CD14-positive monocyte (primary cell): ENCODE measurements at regions of chr6 and their contacts with region 1.

Region 1: DNA sequence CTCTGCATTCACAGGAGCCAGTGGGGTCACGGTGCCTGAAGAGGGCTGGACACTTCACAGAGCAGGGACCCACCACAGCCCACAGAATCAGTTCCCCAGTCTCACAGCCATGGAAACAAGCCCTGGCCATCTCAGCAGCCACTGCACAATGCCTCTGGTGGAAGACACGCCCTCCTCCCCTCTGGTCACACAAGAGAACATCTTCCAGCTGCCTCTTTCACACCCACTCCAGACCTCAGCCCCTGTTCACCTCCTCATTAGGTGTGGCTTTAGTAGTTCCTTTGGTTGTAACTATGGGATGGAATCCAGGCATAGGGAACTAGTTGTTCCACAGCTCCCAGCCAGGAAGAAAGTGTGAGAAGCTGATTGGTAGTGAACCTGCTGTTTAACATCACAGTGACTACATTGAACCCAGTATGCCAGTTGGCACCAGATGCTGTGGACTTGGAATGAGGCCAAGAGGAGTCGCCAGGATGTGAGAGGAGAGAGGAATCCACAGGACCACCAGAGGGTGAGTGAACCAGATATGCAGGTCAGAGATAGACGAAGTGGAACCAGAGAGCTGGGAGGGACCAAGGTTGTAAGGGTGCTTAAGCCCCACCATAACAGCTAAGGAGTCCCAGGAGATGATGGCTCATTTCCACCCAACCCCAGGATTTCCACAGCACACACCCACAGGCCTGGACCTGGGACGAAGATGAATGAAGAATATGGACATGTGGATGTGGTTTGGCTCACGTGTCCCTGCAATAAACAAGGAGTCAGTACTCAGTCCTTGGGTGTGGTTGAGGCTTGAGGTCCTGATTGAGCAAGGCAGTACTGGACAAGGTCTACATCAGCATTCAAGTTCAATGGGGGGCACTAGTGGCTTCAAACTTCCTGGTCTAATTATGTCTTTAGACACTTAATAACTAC is 8.8 kb upstream of the BTN3A3 start:
- DNase-seq: no peak
- H3K4me3 ChIP-seq: no peak overlapping the region
- H3K4me3 Mint-ChIP-seq: no peak overlapping the region
- H3K27ac ChIP-seq: no peak overlapping the region
- H3K27ac Mint-ChIP-seq: no peak overlapping the region
- H3K4me1 ChIP-seq: peaks cover 6 to 12% of the 10 kb centered on the region in 2 donors
- H3K4me1 Mint-ChIP-seq: peaks cover 15% of the 10 kb centered on the region
- H3K27me3 ChIP-seq: no peaks in the 10 kb centered on the region
- H3K27me3 Mint-ChIP-seq: peaks cover 0 to 3% (median 0%) of the 10 kb centered on the region in 3 donors
- CTCF ChIP-seq: no peak

Region 2: GRCh38 chr6:26394289-26394688 is 37.2 kb before region 1 on chr6:
- intact Hi-C with region 1: no loop called
- DNase-seq: peak in 1 of 3 donors; percentile 28
- H3K4me3 ChIP-seq: no peak overlapping the region
- H3K4me3 Mint-ChIP-seq: no peak overlapping the region
- H3K27ac ChIP-seq: no peak overlapping the region
- H3K27ac Mint-ChIP-seq: no peak overlapping the region
- H3K4me1 ChIP-seq: peaks cover 28 to 30% of the 10 kb centered on the region in 2 donors
- H3K4me1 Mint-ChIP-seq: peaks cover 42% of the 10 kb centered on the region
- H3K27me3 ChIP-seq: no peaks in the 10 kb centered on the region
- H3K27me3 Mint-ChIP-seq: peaks cover 0 to 2% (median 1%) of the 10 kb centered on the region in 3 donors
- CTCF ChIP-seq: no peak

Region 3: DNA sequence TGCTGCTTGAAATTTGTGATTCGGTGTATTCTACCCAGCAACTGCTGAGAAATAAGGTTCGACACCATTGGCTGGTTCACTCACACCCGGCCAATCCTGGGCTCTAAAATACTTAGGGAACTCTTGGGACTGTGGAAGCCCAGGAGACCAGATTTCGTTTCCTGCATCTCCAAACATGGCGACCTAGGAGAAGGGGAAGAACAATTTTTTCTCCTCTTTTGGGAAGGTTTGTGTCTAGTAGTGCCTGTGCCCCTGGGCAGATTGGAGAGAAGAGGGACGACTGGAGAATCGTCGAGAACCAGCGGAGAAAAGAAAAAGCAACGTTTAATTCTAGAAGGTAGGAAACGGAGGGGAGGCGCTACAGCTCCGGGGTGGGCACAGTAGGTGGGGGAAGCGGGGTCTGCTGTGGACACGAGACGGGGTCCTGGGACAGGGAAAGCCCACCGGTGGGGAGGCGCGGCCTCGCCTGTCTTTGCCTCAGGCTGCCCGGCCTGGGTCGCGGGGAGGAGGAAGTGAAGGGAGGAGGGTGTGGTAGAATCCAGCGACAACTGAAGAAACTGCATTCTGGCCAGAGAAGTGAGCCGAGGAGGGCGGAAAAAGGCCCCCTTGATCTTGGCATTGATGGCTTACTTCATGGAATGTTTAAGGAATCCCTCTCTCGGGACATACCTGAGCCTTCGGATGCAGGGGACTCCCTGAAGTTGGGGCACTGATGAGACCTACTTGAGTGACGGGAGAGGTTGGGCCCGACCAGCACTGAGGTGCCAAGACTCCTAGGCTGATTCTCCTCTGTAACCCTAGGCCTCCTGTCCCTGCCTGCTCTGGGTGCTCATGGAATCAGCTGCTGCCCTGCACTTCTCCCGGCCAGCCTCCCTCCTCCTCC is 26.5 kb after region 1 on chr6 and contains the start of gene BTN2A1:
- intact Hi-C with region 1: loop called in 1 of 2 experiments (anchors 2 kb)
- DNase-seq: peak; percentile 81 to 93 (median 91)
- H3K4me3 ChIP-seq: peak within 1 kb of the TSS; percentile 84 to 99 (median 96)
- H3K4me3 Mint-ChIP-seq: peak within 1 kb of the TSS; percentile 96 to 100
- H3K27ac ChIP-seq: peak within 1 kb of the TSS; percentile 93 to 99
- H3K27ac Mint-ChIP-seq: peak within 1 kb of the TSS; percentile 97 to 100 (median 99)
- H3K4me1 ChIP-seq: peaks cover 42 to 58% of the 10 kb centered on the region in 2 donors
- H3K4me1 Mint-ChIP-seq: peaks cover 70% of the 10 kb centered on the region
- H3K27me3 ChIP-seq: no peaks in the 10 kb centered on the region
- H3K27me3 Mint-ChIP-seq: peaks cover 0 to 5% (median 0%) of the 10 kb centered on the region in 3 donors
- CTCF ChIP-seq: no peak
- polyA plus RNA-seq, gene BTN2A1: 4.3 to 66.4 (median 10.8) TPM